Activated naive CD4-positive, alpha-beta T cell treated with anti-CD3 and anti-CD28 coated beads, Interleukin-2, amount 10 ng/mL, durations not matched to agents 7 days and 5 days (primary cell): ENCODE measurements at regions of chr3 and their contacts with region 1.

Region 1: DNA sequence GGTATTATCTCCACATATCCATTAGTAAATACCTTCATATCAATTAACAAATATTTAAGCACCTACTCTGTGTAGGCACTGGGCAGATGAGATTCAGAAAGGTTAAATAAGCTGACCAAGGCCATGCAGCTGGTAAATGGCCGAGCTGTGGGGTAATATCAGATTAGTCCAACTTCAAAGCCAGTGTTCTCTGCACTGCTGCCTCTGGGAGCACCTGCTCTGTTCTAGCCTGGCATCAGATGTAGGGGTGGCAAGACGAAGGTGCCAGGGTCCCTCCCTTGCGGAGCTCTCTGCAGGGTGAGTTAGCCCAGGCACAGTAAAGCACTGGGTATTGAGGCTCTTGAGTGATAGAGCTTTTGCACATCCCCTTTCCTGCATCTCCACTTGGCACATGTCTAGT is 5.5 kb downstream of the TATDN2 start:
- DNase-seq: no peak
- H3K4me3 Mint-ChIP-seq: no peak overlapping the region
- H3K27ac Mint-ChIP-seq: no peak overlapping the region
- H3K4me1 Mint-ChIP-seq: peaks cover 72% of the 10 kb centered on the region
- H3K27me3 Mint-ChIP-seq: no peaks in the 10 kb centered on the region

Region 2: GRCh38 chr3:10263646-10264363 is 10.1 kb after region 1 on chr3:
- CTCF ChIA-PET with region 1: interaction called, 20 read pairs
- DNase-seq: peak; percentile 82
- H3K4me3 Mint-ChIP-seq: peak overlapping the region; percentile 63
- H3K27ac Mint-ChIP-seq: peak overlapping the region; percentile 81
- H3K4me1 Mint-ChIP-seq: peaks cover 75% of the 10 kb centered on the region
- H3K27me3 Mint-ChIP-seq: no peaks in the 10 kb centered on the region